Right lobe of liver (tissue), 6 donors: ENCODE measurements at regions of chr13 and their contacts with region 1.

Region 1: DNA sequence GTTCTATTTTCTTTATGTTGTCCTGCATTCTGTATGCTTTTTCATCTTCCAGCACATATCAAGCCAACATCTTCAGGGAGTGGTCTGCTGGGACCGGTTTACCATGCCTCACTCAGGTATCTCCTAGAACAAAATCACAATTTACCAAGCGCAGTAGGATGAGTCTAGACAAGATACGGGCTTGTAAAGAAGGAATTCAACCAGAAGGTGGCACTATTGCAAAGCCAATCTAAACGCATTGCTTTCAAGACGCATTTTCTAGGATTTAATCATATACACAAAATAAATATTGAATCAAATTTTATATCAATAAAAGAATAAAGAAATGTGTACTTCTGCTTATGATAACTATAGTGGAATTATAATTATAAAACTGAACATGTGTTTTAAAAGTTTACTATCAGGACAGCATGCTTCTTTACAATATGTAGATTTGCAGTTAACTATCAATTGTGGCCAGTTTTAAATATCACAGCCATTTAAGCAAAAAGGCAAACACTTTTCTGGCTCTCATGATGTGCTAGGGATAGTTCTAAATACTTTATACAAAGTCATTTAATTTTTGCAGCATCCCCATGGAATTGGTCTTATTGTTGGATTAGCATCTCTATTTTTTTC is 16.1 kb upstream of the TPP2 start:
- DNase-seq: no peak
- ATAC-seq: peak; percentile 86 to 91 (median 88)
- H3K4me3 ChIP-seq: no peak overlapping the region
- H3K27ac ChIP-seq: no peak overlapping the region
- H3K4me1 ChIP-seq: no peaks in the 10 kb centered on the region
- H3K27me3 ChIP-seq: no peaks in the 10 kb centered on the region
- CTCF ChIP-seq: peak; percentile 71 to 84 (median 79)
- POLR2A ChIP-seq: no peak

Region 2: GRCh38 chr13:102710261-102710679 is 129.6 kb after region 1 on chr13:
- intact Hi-C with region 1: no loop called
- DNase-seq: no peak
- ATAC-seq: no peak
- H3K4me3 ChIP-seq: no peak overlapping the region
- H3K27ac ChIP-seq: no peak overlapping the region
- H3K4me1 ChIP-seq: no peaks in the 10 kb centered on the region
- H3K27me3 ChIP-seq: no peaks in the 10 kb centered on the region
- CTCF ChIP-seq: no peak
- POLR2A ChIP-seq: no peak

Region 3: DNA sequence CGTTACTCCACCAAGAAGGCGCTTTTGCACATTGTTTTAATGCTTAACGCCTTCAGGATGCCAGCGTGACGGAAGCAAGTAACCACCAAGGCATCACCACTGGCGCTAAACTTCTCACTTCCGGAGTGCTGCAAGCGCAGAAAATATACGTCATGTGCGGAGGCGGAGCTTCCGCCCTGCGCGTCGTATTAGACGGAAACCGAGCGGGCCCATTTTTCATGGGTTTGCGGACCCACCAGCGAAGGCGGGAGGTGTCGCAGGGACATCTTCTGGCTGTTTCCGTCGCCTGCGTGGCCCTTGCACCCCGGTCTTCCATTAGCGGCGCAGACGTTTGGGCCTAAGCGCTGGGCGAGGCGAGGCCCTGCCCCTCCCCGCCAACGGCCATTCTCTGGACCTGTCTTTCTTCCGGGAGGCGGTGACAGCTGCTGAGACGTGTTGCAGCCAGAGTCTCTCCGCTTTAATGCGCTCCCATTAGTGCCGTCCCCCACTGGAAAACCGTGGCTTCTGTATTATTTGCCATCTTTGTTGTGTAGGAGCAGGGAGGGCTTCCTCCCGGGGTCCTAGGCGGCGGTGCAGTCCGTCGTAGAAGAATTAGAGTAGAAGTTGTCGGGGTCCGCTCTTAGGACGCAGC is 265.1 kb after region 1 on chr13 and contains the start of gene ERCC5:
- intact Hi-C with region 1: loop called in 1 of 2 experiments (anchors 10 kb)
- DNase-seq: peak; percentile 93 to 96 (median 96)
- ATAC-seq: peak; percentile 89 to 96 (median 93)
- H3K4me3 ChIP-seq: peak within 1 kb of the TSS; percentile 78 to 93 (median 90)
- H3K27ac ChIP-seq: peak within 1 kb of the TSS; percentile 84 to 97 (median 94)
- H3K4me1 ChIP-seq: peaks cover 0 to 20% (median 7%) of the 10 kb centered on the region in 4 donors
- H3K27me3 ChIP-seq: no peaks in the 10 kb centered on the region
- CTCF ChIP-seq: peak in 2 of 4 donors; percentile 10 to 35
- POLR2A ChIP-seq: peak; percentile 89
- total RNA-seq, gene ERCC5: 21.6 to 47.4 (median 29.2) TPM